CD14-positive monocyte (primary cell): ENCODE measurements at regions of chr6 and their contacts with region 1.

Region 1: DNA sequence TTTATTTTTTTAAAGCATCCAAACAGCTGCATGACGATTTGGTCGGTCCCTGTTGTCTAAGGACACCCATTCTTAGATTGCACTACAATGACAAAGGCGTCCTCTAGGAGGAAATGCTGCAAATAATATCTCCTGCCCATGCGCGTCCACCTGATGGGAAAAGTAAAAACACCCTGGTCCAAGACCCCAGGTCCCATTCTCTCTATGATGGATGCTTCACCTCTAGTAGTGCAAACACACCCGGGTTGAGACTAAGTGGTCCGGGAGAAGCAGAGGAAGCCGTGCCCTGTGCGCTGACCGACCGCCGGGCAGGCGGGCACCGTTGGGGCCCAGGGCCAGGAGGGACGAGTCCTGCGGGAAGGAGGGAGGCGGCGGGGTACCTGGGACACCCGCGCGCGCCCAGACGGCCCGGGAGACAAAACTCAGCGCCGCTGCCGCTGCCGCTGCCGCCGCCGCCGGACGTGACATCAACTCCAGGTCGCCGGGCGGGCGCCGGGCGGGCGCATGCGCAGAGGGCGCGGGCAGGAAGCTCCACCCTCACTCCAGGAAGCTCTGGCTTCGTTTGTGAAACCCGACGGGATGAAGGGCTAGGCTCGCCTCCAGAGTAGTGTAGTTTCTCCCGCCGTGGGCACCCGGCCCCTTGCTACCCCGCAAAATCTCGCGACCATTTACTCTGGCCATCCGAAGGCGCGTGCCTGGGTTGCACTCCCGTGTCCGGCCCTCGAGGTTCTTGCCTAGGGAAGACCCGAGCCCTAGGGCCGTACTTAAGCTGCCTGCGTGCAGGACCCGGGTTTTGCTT is at the start of gene TBC1D7:
- DNase-seq: peak; percentile 87 to 91 (median 91)
- H3K4me3 ChIP-seq: peak within 1 kb of the TSS; percentile 88 to 98 (median 92)
- H3K4me3 Mint-ChIP-seq: peak within 1 kb of the TSS; percentile 90 to 93
- H3K27ac ChIP-seq: peak within 1 kb of the TSS; percentile 75 to 92
- H3K27ac Mint-ChIP-seq: peak within 1 kb of the TSS; percentile 93 to 98 (median 96)
- H3K4me1 ChIP-seq: peaks cover 6 to 17% of the 10 kb centered on the region in 2 donors
- H3K4me1 Mint-ChIP-seq: peaks cover 21% of the 10 kb centered on the region
- H3K27me3 ChIP-seq: no peaks in the 10 kb centered on the region
- H3K27me3 Mint-ChIP-seq: no peaks in the 10 kb centered on the region
- CTCF ChIP-seq: peak; percentile 19
- polyA plus RNA-seq, gene TBC1D7: 12.2 to 34.3 (median 34.3) TPM

Region 2: DNA sequence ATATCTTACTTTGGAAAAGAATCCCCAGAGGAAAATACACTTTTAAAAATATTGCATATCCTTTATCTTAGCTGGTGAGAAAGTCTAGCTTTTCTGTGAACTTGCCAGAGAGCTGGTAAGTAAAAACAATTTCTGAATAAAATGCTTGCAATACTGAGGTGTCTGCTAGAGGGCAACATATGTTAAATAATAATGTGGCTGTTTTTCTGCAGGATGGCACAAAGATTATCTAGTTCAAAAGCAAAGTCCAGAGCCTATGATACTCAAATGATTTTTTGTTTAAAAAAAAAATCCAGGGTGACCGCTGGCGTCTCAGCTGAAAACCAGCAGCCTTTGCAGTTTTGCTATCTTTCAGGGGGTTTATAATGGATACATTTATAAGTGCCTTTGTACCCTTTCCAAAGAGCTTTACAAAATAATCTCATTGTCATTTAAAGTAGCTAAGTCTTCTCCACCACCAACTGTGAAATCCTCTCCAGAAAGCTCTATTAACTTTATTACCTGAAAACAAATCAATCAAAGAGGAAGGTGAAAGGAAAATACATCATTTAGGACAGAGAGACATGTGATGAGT is 416.8 kb before region 1 on chr6:
- intact Hi-C with region 1: loop called (anchors 10 kb)
- DNase-seq: peak in 2 of 3 donors; percentile 9 to 34
- H3K4me3 ChIP-seq: no peak overlapping the region
- H3K4me3 Mint-ChIP-seq: no peak overlapping the region
- H3K27ac ChIP-seq: no peak overlapping the region
- H3K27ac Mint-ChIP-seq: no peak overlapping the region
- H3K4me1 ChIP-seq: peaks cover 11 to 16% of the 10 kb centered on the region in 2 donors
- H3K4me1 Mint-ChIP-seq: peaks cover 19% of the 10 kb centered on the region
- H3K27me3 ChIP-seq: no peaks in the 10 kb centered on the region
- H3K27me3 Mint-ChIP-seq: peaks cover 0 to 3% (median 0%) of the 10 kb centered on the region in 3 donors
- CTCF ChIP-seq: peak; percentile 54

Region 3: DNA sequence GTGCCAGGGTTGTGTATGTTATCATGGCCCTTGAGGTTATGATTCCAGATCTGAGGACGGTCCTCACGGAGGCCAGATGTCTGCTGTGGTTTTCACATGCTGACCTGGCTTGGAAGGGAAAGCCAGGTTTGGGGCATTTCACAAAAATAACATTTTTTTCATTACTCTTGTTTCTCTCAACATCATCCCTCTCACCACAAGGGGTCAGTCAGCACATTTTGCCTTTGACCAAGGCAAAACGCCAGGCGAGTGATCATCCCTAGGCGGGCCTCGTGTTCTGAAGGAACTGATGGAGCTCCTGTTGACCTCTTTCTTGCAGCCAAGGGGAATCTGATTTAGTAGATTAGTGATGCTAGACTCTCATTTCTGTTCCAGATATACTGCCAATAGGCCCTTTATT is 133.4 kb before region 1 on chr6:
- intact Hi-C with region 1: loop called (anchors 2 to 10 kb)
- DNase-seq: peak; percentile 68 to 74 (median 70)
- H3K4me3 ChIP-seq: no peak overlapping the region
- H3K4me3 Mint-ChIP-seq: peak overlapping the region in 1 of 2 donors; percentile 20
- H3K27ac ChIP-seq: no peak overlapping the region
- H3K27ac Mint-ChIP-seq: peak overlapping the region in 3 of 7 donors; percentile 19 to 72 (median 54)
- H3K4me1 ChIP-seq: no peaks in the 10 kb centered on the region
- H3K4me1 Mint-ChIP-seq: peaks cover 7% of the 10 kb centered on the region
- H3K27me3 ChIP-seq: no peaks in the 10 kb centered on the region
- H3K27me3 Mint-ChIP-seq: peaks cover 0 to 2% (median 0%) of the 10 kb centered on the region in 3 donors
- CTCF ChIP-seq: peak; percentile 77

Region 4: DNA sequence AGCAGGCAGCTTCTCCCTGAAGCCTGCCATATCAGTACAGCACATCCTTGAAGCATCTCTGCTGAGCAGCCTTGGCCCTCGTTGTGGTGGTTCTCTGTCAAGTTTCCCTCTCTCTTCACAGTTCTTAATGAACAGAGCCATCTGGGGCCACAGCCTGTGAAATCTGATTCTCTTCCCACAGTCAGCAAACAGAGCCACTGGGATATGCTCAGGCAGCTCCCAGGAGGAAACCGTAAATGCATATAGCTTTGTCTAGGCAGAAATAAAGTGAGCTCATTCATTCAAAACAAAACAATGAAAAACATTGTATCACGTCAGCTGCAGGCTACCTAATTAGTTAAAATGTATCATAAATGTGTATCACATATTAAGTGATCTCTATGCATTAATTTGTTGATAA is 80.2 kb before region 1 on chr6:
- intact Hi-C with region 1: no loop called
- DNase-seq: no peak
- H3K4me3 ChIP-seq: no peak overlapping the region
- H3K4me3 Mint-ChIP-seq: no peak overlapping the region
- H3K27ac ChIP-seq: no peak overlapping the region
- H3K27ac Mint-ChIP-seq: no peak overlapping the region
- H3K4me1 ChIP-seq: peaks cover 12 to 13% of the 10 kb centered on the region in 2 donors
- H3K4me1 Mint-ChIP-seq: peaks cover 15% of the 10 kb centered on the region
- H3K27me3 ChIP-seq: no peaks in the 10 kb centered on the region
- H3K27me3 Mint-ChIP-seq: peaks cover 0 to 1% (median 0%) of the 10 kb centered on the region in 3 donors
- CTCF ChIP-seq: no peak

Region 5: GRCh38 chr6:13272131-13273046 is 55.9 kb before region 1 on chr6:
- intact Hi-C with region 1: loop called in 1 of 2 experiments (anchors 5 kb)
- DNase-seq: peak; percentile 88 to 96 (median 95)
- H3K4me3 ChIP-seq: peak overlapping the region; percentile 46 to 100 (median 74)
- H3K4me3 Mint-ChIP-seq: peak overlapping the region; percentile 93 to 94
- H3K27ac ChIP-seq: peak overlapping the region; percentile 84 to 92
- H3K27ac Mint-ChIP-seq: peak overlapping the region; percentile 97 to 99 (median 99)
- H3K4me1 ChIP-seq: peaks cover 64 to 73% of the 10 kb centered on the region in 2 donors
- H3K4me1 Mint-ChIP-seq: peaks cover 71% of the 10 kb centered on the region
- H3K27me3 ChIP-seq: no peaks in the 10 kb centered on the region
- H3K27me3 Mint-ChIP-seq: peaks cover 0 to 2% (median 0%) of the 10 kb centered on the region in 3 donors
- CTCF ChIP-seq: no peak